ENCODE measurements at regions of chr22 and their contacts with region 1.

Region 1: DNA sequence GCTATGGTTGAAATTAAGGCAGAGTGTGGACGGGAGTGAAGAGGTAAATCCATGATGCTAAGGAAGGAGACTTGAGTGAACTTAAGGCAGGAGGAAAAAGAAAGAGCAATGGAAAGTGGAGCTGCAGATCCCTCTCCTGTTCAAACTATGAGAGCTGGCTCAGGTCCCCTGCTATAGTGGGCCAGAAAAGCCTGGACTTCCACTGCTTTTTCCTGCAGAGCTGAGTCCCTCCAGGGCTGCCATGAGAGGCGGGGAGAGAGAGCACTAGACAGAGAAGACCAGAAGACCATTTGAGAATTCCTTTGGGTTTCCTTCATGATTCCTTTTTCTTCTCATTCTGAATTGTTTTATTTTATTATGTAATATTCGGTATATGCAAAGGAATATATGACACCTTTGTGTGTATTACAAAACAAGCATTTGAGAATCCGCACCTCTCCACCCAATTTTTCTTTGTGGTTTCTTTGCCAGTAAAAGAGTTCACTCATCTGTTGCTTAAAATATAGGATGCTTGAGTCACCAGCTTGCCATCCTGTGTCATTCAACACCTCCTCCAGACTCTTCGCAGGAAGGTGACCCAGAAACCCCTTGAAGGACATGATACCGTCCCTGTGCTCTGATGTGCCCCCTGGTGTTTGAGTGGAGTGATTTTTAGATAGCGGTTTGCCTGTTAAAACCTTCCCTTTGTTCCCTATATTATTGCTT is 24.4 kb downstream of the SREBF2 start:
- DNase-seq: peak; percentile 67
- H3K4me3 Mint-ChIP-seq: peak overlapping the region; percentile 31
- H3K27ac Mint-ChIP-seq: peak overlapping the region; percentile 92
- H3K4me1 Mint-ChIP-seq: peaks cover 62% of the 10 kb centered on the region
- H3K27me3 Mint-ChIP-seq: no peaks in the 10 kb centered on the region

Region 2: GRCh38 chr22:41688365-41689211 is 168.7 kb before region 1 on chr22 and contains the start of gene SNU13:
- intact Hi-C with region 1: loop called (anchors 2 kb)
- DNase-seq: peak; percentile 93
- H3K4me3 Mint-ChIP-seq: peak within 1 kb of the TSS; percentile 99
- H3K27ac Mint-ChIP-seq: peak within 1 kb of the TSS; percentile 99
- H3K4me1 Mint-ChIP-seq: peaks cover 14% of the 10 kb centered on the region
- H3K27me3 Mint-ChIP-seq: no peaks in the 10 kb centered on the region
- total RNA-seq, gene SNU13: 270 and 284 TPM in 2 replicates

Region 3: DNA sequence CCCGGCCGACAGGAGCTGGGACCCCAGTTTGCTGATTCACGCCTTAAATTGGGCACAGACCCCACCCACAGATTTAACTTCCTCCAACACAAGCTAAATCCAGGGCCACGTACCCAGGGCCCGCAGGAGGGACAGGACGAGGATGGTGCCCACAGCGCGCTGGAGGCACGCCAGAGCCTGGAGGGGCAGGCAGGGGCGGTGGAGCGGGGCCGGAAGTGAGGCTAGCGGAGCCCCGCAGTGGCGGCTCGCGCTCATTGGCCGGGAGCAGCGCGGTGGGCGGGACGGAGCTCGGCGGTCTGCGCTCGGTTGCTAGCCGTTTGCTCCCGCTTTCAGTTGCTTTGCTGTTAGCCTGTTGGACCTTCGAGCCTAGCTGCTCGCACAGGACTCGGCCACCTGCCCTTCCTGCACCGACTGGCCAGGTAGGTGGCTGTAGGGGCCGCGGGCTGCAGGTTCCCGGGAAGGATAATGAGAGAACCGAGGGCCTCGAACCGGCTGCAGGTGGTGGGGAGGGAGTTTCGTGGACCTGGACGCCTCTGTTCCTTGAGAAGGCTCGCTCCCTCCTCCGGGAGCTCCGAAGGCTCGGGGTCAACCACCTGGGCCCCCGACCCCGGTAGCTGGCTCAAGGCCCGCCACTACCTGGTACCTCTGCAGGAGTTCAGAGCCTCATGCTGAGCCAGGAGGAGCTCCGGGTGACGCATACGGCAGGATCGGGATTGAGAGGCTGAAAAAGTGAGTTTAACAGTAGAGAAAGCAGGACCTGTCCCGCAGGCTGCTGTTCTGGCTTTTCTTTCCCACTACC is 56.8 kb before region 1 on chr22 and contains the start of gene CCDC134:
- intact Hi-C with region 1: loop called (anchors 5 kb)
- DNase-seq: peak; percentile 90
- H3K4me3 Mint-ChIP-seq: peak within 1 kb of the TSS; percentile 93
- H3K27ac Mint-ChIP-seq: peak within 1 kb of the TSS; percentile 97
- H3K4me1 Mint-ChIP-seq: peaks cover 33% of the 10 kb centered on the region
- H3K27me3 Mint-ChIP-seq: no peaks in the 10 kb centered on the region
- total RNA-seq, gene CCDC134: 17.4 and 19.6 TPM in 2 replicates

Region 4: GRCh38 chr22:41822317-41823060 is 34.8 kb before region 1 on chr22:
- intact Hi-C with region 1: loop called (anchors 2 kb)
- DNase-seq: no peak
- H3K4me3 Mint-ChIP-seq: no peak overlapping the region
- H3K27ac Mint-ChIP-seq: peak overlapping the region; percentile 79
- H3K4me1 Mint-ChIP-seq: peaks cover 23% of the 10 kb centered on the region
- H3K27me3 Mint-ChIP-seq: no peaks in the 10 kb centered on the region

Region 5: GRCh38 chr22:41832553-41833368 is 24.5 kb before region 1 on chr22 and contains the start of gene SREBF2:
- intact Hi-C with region 1: loop called (anchors 1 kb)
- DNase-seq: peak; percentile 99
- H3K4me3 Mint-ChIP-seq: peak within 1 kb of the TSS; percentile 99
- H3K27ac Mint-ChIP-seq: peak within 1 kb of the TSS; percentile 97
- H3K4me1 Mint-ChIP-seq: peaks cover 46% of the 10 kb centered on the region
- H3K27me3 Mint-ChIP-seq: no peaks in the 10 kb centered on the region
- total RNA-seq, gene SREBF2: 191 and 202 TPM in 2 replicates

Region 6: GRCh38 chr22:41842996-41843970 is 14.0 kb before region 1 on chr22:
- intact Hi-C with region 1: loop called (anchors 1 kb)
- DNase-seq: no peak
- H3K4me3 Mint-ChIP-seq: no peak overlapping the region
- H3K27ac Mint-ChIP-seq: peak overlapping the region; percentile 68
- H3K4me1 Mint-ChIP-seq: peaks cover 67% of the 10 kb centered on the region
- H3K27me3 Mint-ChIP-seq: no peaks in the 10 kb centered on the region

Region 7: GRCh38 chr22:41873391-41873790 is 16.1 kb after region 1 on chr22:
- intact Hi-C with region 1: loop called (anchors 1 kb)
- DNase-seq: no peak
- H3K4me3 Mint-ChIP-seq: no peak overlapping the region
- H3K27ac Mint-ChIP-seq: peak overlapping the region; percentile 81
- H3K4me1 Mint-ChIP-seq: peaks cover 19% of the 10 kb centered on the region
- H3K27me3 Mint-ChIP-seq: no peaks in the 10 kb centered on the region

Region 8: GRCh38 chr22:41898645-41899044 is 41.3 kb after region 1 on chr22:
- intact Hi-C with region 1: no loop called
- DNase-seq: no peak
- H3K4me3 Mint-ChIP-seq: no peak overlapping the region
- H3K27ac Mint-ChIP-seq: no peak overlapping the region
- H3K4me1 Mint-ChIP-seq: peaks cover 2% of the 10 kb centered on the region
- H3K27me3 Mint-ChIP-seq: no peaks in the 10 kb centered on the region

Region 9: DNA sequence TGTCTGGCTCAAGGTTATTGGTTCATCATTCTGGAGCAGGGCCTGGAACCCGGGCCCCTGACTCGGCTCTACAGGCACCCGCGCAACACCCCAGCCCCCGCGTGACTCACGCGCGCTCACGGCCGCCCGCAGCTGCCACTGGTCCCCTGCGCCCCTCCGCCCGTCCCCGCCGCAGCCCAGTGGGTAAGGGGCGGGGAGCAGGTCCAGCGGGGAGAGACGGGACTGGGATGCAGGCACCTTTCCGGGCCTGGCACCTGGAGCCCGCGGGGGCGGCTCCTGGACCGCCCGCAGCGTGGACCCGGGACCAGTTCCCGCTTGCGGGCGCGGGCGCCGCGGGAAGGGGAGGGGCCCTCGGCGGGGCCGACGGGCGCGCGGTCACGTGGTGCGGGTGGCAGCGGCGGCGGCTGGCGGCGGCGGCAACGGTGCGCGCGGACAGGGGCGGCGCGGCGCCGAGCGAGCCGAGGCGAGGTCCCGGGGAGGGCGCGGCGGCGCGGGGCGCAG is 119.1 kb after region 1 on chr22:
- intact Hi-C with region 1: no loop called
- DNase-seq: peak; percentile 56
- H3K4me3 Mint-ChIP-seq: peak overlapping the region; percentile 74
- H3K27ac Mint-ChIP-seq: no peak overlapping the region
- H3K4me1 Mint-ChIP-seq: peaks cover 8% of the 10 kb centered on the region
- H3K27me3 Mint-ChIP-seq: peaks cover 35% of the 10 kb centered on the region